Mammary epithelial cell (primary cell): ENCODE measurements at regions of chr7 and their contacts with region 1.

Region 1: GRCh38 chr7:6729492-6730342 is 23.0 kb upstream of the ZNF12 start:
- DNase-seq: peak; percentile 75
- H3K4me3 ChIP-seq: peak overlapping the region; percentile 60 to 86 (median 72)
- H3K27ac ChIP-seq: peak overlapping the region; percentile 49
- H3K4me1 ChIP-seq: no peaks in the 10 kb centered on the region
- H3K27me3 ChIP-seq: no peaks in the 10 kb centered on the region
- CTCF ChIP-seq: no peak

Region 2: DNA sequence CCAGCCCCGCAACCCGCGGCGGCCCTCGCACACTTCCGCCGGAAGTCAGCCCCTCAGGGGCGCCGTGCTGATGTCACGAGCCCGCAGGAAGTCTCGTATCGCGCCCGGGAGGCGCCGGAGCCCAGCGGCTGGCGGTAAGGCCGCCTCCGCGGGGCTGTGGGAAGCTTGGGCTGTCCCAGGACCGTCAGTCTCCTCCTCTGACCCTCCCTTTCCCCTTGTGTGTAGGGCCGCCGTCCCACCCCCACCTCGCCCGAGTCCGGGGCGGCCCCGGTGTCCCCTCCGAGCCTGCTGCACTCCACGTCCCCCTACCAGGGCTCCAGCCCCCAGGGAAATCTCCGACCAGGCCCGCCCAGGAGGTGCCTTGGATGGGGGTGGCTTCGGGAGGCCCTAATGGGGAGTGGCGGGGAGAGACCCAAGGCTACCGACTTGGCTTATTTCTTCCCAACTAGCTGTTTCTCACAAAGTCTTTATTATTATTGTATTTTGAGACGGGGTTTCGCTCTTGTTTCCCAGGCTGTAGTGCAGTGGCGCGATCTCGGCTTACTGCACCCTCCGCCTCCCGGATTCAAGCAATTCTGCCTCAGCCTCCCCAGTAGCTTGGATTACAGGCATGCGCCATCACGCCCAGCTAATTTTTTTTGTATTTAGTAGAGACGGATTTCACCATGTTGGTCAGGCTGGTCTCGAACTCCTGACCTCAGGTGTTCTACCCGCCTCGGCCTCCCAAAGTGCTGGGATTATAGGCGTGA is 152.2 kb before region 1 on chr7 and contains the start of gene ZDHHC4:
- CTCF ChIA-PET with region 1: no interaction called
- dilution Hi-C with region 1: no loop called
- in situ Hi-C with region 1: no loop called
- intact Hi-C with region 1: no loop called
- DNase-seq: peak; percentile 75
- H3K4me3 ChIP-seq: peak within 1 kb of the TSS; percentile 58 to 86 (median 61)
- H3K27ac ChIP-seq: peak within 1 kb of the TSS; percentile 11
- H3K4me1 ChIP-seq: no peaks in the 10 kb centered on the region
- H3K27me3 ChIP-seq: no peaks in the 10 kb centered on the region
- CTCF ChIP-seq: no peak
- total RNA-seq, gene ZDHHC4: 34.1 to 52.5 TPM

Region 3: GRCh38 chr7:6631605-6632004 is 98.1 kb before region 1 on chr7:
- CTCF ChIA-PET with region 1: no interaction called
- dilution Hi-C with region 1: loop called (anchors 5 kb)
- in situ Hi-C with region 1: no loop called
- intact Hi-C with region 1: no loop called
- DNase-seq: no peak
- H3K4me3 ChIP-seq: no peak overlapping the region
- H3K27ac ChIP-seq: no peak overlapping the region
- H3K4me1 ChIP-seq: peaks cover 13% of the 10 kb centered on the region
- H3K27me3 ChIP-seq: no peaks in the 10 kb centered on the region
- CTCF ChIP-seq: no peak

Region 4: DNA sequence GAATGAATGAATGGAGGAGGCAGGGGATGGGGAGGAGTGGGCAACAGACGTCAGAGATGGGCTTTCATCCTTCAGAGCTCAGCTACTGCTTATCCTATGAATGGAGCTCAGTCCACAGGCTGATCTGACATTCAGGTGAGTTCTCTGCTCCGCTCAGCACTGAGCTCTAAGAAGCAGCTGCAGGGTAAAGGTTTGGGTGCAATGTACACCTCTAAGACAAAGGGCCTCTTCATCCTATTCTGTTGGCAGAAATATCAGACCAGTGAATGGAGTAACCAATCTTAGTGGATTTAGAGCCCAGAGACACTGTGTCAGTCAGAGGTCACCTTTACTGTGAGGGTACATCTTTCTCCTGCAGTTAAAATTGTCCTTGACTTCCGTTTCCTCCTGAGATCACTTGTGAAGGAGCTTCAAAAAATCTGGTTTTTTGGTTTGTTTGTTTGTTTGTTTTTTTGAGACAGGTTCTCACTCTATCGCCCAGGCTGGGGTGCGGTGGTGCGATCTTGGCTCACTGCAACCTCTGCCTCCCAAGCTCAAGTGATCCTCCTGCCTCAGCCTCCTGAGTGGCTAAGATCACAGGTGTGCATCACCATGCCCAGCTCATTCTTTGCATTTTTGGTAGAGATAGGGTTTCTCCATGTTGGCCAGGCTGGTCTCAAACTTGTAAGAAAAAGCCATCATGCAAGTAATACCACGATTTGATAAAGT is 101.5 kb after region 1 on chr7:
- CTCF ChIA-PET with region 1: no interaction called
- dilution Hi-C with region 1: no loop called
- in situ Hi-C with region 1: loop called in 1 of 2 experiments (anchors 25 kb)
- intact Hi-C with region 1: no loop called
- DNase-seq: no peak
- H3K4me3 ChIP-seq: no peak overlapping the region
- H3K27ac ChIP-seq: no peak overlapping the region
- H3K4me1 ChIP-seq: no peaks in the 10 kb centered on the region
- H3K27me3 ChIP-seq: no peaks in the 10 kb centered on the region
- CTCF ChIP-seq: no peak